GM12878 (cell line): ENCODE measurements at regions of chr13 and their contacts with region 1.

Region 1: GRCh38 chr13:61880578-61881283 is 465.1 kb upstream of the PCDH20 start:
- DNase-seq: no peak
- ATAC-seq: peak; percentile 98
- H3K4me3 ChIP-seq: no peak overlapping the region
- H3K27ac ChIP-seq: no peak overlapping the region
- H3K4me1 ChIP-seq: no peaks in the 10 kb centered on the region
- H3K27me3 ChIP-seq: no peaks in the 10 kb centered on the region
- CTCF ChIP-seq: peak; percentile 52 to 71 (median 52)
- EP300 ChIP-seq: no peak
- POLR2A ChIP-seq: no peak
- RAD21 ChIP-seq: peak; percentile 46

Region 2: GRCh38 chr13:61546413-61546812 is 334.3 kb before region 1 on chr13:
- CTCF ChIA-PET with region 1: no interaction called
- POLR2A ChIA-PET with region 1: no interaction called
- RAD21 ChIA-PET with region 1: no interaction called
- SMC1A ChIA-PET with region 1: no interaction called
- in situ Hi-C with region 1: no loop called
- intact Hi-C with region 1: no loop called
- DNase-seq: no peak
- ATAC-seq: no peak
- H3K4me3 ChIP-seq: no peak overlapping the region
- H3K27ac ChIP-seq: no peak overlapping the region
- H3K4me1 ChIP-seq: no peaks in the 10 kb centered on the region
- H3K27me3 ChIP-seq: no peaks in the 10 kb centered on the region
- CTCF ChIP-seq: no peak
- EP300 ChIP-seq: no peak
- POLR2A ChIP-seq: no peak
- RAD21 ChIP-seq: no peak

Region 3: DNA sequence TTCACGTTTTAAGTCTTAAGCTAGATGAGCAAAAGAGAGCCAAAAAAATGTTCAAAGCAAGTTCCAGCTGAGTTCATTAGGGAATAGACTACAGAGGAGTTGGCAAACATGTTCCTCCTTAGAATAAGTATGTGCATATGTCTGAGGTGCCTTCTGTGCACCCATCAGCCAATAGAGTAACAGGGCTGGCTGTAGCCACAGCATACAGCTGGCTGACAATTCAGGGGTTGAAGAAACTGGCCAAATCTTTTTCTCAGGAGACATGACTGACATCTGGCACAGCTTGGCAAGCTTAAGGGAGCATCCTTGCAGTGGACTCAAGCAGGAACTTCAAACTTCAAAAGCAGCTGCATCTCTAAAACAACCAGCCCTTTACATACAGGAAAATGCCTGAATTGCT is 50.3 kb before region 1 on chr13:
- CTCF ChIA-PET with region 1: no interaction called
- POLR2A ChIA-PET with region 1: no interaction called
- RAD21 ChIA-PET with region 1: no interaction called
- SMC1A ChIA-PET with region 1: no interaction called
- in situ Hi-C with region 1: no loop called
- intact Hi-C with region 1: no loop called
- DNase-seq: no peak
- ATAC-seq: no peak
- H3K4me3 ChIP-seq: no peak overlapping the region
- H3K27ac ChIP-seq: no peak overlapping the region
- H3K4me1 ChIP-seq: no peaks in the 10 kb centered on the region
- H3K27me3 ChIP-seq: no peaks in the 10 kb centered on the region
- CTCF ChIP-seq: no peak
- EP300 ChIP-seq: no peak
- POLR2A ChIP-seq: no peak
- RAD21 ChIP-seq: no peak

Region 4: GRCh38 chr13:61898207-61898606 is 17.5 kb after region 1 on chr13:
- CTCF ChIA-PET with region 1: interaction called, 10 read pairs
- POLR2A ChIA-PET with region 1: no interaction called
- RAD21 ChIA-PET with region 1: no interaction called
- SMC1A ChIA-PET with region 1: no interaction called
- in situ Hi-C with region 1: no loop called
- intact Hi-C with region 1: no loop called
- DNase-seq: no peak
- ATAC-seq: no peak
- H3K4me3 ChIP-seq: no peak overlapping the region
- H3K27ac ChIP-seq: no peak overlapping the region
- H3K4me1 ChIP-seq: no peaks in the 10 kb centered on the region
- H3K27me3 ChIP-seq: no peaks in the 10 kb centered on the region
- CTCF ChIP-seq: no peak
- EP300 ChIP-seq: no peak
- POLR2A ChIP-seq: no peak
- RAD21 ChIP-seq: no peak

Region 5: GRCh38 chr13:61954092-61954491 is 73.4 kb after region 1 on chr13:
- CTCF ChIA-PET with region 1: interaction called, 44 read pairs
- POLR2A ChIA-PET with region 1: no interaction called
- RAD21 ChIA-PET with region 1: interaction called, 15 read pairs
- SMC1A ChIA-PET with region 1: interaction called, 19 read pairs
- in situ Hi-C with region 1: no loop called
- intact Hi-C with region 1: loop called (anchors 1 kb)
- DNase-seq: no peak
- ATAC-seq: no peak
- H3K4me3 ChIP-seq: no peak overlapping the region
- H3K27ac ChIP-seq: no peak overlapping the region
- H3K4me1 ChIP-seq: no peaks in the 10 kb centered on the region
- H3K27me3 ChIP-seq: no peaks in the 10 kb centered on the region
- CTCF ChIP-seq: peak in 1 of 3 experiments; percentile 37; a peak in 1 of 6 replicates
- EP300 ChIP-seq: no peak
- POLR2A ChIP-seq: no peak
- RAD21 ChIP-seq: peak; percentile 71